ENCODE measurements at regions of chr19 and their contacts with region 1.

Region 1: GRCh38 chr19:36528194-36528920 is at the start of gene ZNF260:
- DNase-seq: peak; percentile 93
- ATAC-seq: peak; percentile 92
- H3K4me3 Mint-ChIP-seq: peak within 1 kb of the TSS; percentile 96
- H3K27ac Mint-ChIP-seq: peak within 1 kb of the TSS; percentile 96
- H3K4me1 Mint-ChIP-seq: peaks cover 17% of the 10 kb centered on the region
- H3K27me3 Mint-ChIP-seq: no peaks in the 10 kb centered on the region
- total RNA-seq, gene ZNF260: 8.6 to 10.5 TPM

Region 2: DNA sequence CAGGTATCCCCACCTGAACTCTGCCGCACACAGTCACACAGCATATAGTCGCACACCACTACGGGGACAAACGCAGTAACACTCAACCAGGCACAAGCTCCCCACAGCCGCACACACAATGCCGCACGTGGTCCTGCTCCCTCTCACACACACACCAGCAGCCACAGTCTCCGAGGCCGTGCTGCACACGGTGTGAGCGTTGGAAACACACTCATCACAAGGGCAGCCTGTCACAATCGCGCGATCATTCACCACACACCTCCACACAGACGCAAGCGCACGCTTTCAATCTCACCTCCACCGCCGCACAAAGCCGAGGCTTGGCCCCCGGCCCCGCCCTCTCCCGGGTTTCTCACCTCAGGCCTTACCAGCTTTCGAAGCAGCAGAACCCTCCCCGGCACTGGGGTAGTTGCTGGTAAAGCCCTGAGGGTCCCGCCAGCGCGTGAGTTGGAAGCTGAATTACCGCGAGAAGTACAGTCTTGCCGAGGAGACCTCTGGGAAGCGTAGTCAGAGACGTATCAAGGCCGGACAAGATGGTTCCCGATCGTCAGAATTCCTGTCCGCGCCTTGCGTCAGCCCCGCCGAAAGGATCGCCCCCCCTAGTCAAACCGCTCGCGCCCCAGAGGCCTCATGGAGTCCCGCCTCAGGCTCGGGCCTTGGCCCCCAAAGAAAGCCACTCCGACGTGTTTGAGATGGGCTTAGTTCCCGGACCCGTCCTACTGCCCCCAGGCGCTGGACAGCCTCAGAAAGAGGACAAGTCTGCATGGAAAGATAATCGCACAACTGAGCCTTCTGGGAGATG is 39.0 kb before region 1 on chr19 and contains the start of gene ZNF566:
- CTCF ChIA-PET with region 1: no interaction called
- POLR2A ChIA-PET with region 1: interaction called, 24 read pairs
- DNase-seq: peak; percentile 96
- ATAC-seq: peak; percentile 95
- H3K4me3 Mint-ChIP-seq: peak within 1 kb of the TSS; percentile 95
- H3K27ac Mint-ChIP-seq: peak within 1 kb of the TSS; percentile 99
- H3K4me1 Mint-ChIP-seq: peaks cover 31% of the 10 kb centered on the region
- H3K27me3 Mint-ChIP-seq: no peaks in the 10 kb centered on the region
- total RNA-seq, gene ZNF566: 6.2 to 7.5 TPM

Region 3: DNA sequence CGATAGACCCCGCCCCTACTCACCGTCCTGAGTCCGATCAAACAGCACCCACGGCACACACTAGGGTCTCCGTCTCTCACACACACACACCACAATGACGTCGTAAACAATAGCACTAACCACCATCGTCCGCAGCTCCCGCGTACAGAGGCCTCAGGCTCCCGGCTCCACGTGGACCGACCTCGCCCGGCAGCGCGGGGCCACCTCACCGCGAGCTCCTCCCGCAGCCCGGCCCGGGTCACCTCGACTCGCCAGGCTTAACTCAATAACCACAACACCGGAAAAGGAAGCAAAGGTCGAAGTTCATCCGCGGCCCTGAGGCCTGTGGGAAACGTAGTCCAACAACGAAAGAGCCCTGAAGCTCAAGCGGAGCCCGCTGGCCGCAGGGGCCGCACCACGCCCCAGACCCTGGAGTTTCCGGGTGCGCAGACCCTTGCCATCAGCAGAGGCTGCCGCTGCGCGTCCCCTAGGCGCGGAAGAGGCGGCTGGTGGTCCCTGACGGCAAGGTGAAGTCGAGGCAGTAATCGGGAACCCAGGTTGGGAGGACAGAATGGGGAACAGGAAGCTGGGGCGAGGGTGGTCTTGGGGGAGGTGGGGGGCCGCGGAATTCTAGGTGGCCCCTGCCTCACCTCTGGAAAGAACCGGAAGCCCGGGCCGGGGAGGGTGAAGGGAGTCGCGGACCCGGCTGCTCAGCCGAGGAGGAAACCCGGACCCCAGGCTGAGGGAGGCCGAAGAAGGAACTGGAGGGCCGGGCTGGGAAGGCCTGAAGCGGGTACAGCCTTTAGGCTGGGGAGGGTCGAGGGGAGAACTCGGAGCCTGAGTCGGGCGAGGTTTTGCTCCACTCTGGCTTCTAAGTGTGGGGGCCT is 44.9 kb after region 1 on chr19 and contains the start of gene ZNF529:
- CTCF ChIA-PET with region 1: interaction called, 5 read pairs
- POLR2A ChIA-PET with region 1: interaction called, 24 read pairs
- DNase-seq: peak; percentile 91
- ATAC-seq: peak; percentile 87
- H3K4me3 Mint-ChIP-seq: peak within 1 kb of the TSS; percentile 96
- H3K27ac Mint-ChIP-seq: peak within 1 kb of the TSS; percentile 92
- H3K4me1 Mint-ChIP-seq: peaks cover 31% of the 10 kb centered on the region
- H3K27me3 Mint-ChIP-seq: no peaks in the 10 kb centered on the region
- total RNA-seq, gene ZNF529: 13.7 to 15.1 TPM

Region 4: GRCh38 chr19:36605101-36605876 is 76.9 kb after region 1 on chr19 and contains the start of gene ZNF382:
- CTCF ChIA-PET with region 1: interaction called, 3 read pairs
- POLR2A ChIA-PET with region 1: interaction called, 23 read pairs
- DNase-seq: peak; percentile 87
- ATAC-seq: peak; percentile 86
- H3K4me3 Mint-ChIP-seq: peak within 1 kb of the TSS; percentile 84
- H3K27ac Mint-ChIP-seq: peak within 1 kb of the TSS; percentile 92
- H3K4me1 Mint-ChIP-seq: peaks cover 19% of the 10 kb centered on the region
- H3K27me3 Mint-ChIP-seq: no peaks in the 10 kb centered on the region
- total RNA-seq, gene ZNF382: 12.0 to 13.3 TPM

Measured in activated CD8-positive, alpha-beta T cell treated with anti-CD3 and anti-CD28 coated beads, Interleukin-2, amount 10 ng/mL, durations not matched to agents 7 days and 5 days (primary cell).